Aorta (tissue), 5 donors: ENCODE measurements at regions of chr3 and their contacts with region 1.

Region 1: GRCh38 chr3:160413613-160414248 is 14.3 kb downstream of the SMC4 start:
- DNase-seq: peak in 1 of 2 donors; percentile 72
- ATAC-seq: peak; percentile 76
- H3K4me3 ChIP-seq: no peak overlapping the region
- H3K27ac ChIP-seq: no peak overlapping the region
- H3K4me1 ChIP-seq: no peaks in the 10 kb centered on the region
- H3K27me3 ChIP-seq: no peaks in the 10 kb centered on the region

Region 2: DNA sequence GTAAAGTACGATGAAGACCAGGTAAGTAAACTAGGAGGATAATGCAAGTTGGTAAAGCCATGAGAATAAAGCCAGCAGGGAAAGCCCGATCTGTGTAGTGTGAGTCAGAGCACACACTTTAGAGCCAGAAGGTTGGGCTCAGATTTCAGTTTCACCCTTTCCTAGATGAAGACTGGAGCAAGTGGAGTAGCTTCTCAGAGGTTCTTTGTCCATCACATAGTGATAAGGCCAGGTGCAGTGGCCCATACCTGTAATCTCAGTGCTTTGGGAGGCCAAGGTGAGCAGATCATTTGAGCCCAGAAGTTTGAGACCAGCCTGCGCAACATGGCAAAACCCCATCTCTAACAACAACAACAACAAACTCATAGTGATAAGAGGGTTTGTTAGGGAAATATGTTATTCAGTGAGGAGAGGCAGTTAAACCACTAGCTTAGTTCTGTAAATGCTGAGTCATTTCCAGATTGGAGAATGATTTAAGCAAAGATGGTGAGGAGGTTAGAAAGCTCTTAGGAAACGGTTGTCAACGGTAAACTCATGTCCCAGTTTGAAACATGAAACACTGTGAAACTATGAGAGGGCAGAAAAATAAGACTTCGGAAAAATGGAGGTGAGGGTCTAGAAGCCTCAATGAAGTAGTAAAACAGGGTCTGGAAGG is 386.1 kb before region 1 on chr3:
- intact Hi-C with region 1: loop called (anchors 5 to 10 kb)
- DNase-seq: no peak
- ATAC-seq: no peak
- H3K4me3 ChIP-seq: no peak overlapping the region
- H3K27ac ChIP-seq: no peak overlapping the region
- H3K4me1 ChIP-seq: no peaks in the 10 kb centered on the region
- H3K27me3 ChIP-seq: no peaks in the 10 kb centered on the region

Region 3: DNA sequence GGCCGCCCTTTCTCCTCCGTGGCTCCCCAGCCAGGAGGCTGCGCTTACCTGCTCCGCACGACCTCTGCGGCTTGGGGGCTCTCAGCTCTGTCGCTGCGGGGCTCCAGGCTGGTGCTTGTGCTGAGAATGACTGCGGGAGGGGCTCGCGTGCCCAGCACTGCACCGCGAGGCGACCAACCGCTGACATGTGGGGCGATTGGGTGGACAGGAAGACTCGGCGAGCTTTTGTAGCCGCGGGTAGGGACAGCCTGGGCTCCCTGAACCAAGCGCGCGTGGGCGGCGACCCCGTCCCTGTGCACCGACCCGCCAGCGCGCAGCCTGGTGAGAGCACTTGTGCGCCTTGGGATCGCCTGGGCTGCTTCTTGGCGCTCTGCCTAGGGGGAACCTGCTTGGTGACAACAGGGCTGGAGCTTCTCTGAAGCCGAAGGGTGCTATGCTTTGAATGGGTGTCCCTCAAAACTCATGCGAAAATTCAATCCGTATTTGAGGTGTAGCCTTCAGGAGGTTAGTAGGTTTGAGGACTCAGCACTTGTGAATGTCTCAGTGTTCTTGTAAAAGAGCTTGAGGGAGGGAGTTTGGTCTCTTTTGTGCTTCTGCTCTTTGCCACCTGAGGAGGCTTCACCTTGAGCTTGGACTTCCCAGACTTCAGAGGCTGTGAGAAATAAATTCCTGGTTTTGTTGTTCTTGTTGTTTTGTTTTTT is 374.7 kb before region 1 on chr3:
- intact Hi-C with region 1: loop called (anchors 5 to 10 kb)
- DNase-seq: peak in 1 of 2 donors; percentile 59
- ATAC-seq: peak; percentile 60
- H3K4me3 ChIP-seq: peak overlapping the region in 1 of 2 donors; percentile 2
- H3K27ac ChIP-seq: no peak overlapping the region
- H3K4me1 ChIP-seq: no peaks in the 10 kb centered on the region
- H3K27me3 ChIP-seq: no peaks in the 10 kb centered on the region

Region 4: DNA sequence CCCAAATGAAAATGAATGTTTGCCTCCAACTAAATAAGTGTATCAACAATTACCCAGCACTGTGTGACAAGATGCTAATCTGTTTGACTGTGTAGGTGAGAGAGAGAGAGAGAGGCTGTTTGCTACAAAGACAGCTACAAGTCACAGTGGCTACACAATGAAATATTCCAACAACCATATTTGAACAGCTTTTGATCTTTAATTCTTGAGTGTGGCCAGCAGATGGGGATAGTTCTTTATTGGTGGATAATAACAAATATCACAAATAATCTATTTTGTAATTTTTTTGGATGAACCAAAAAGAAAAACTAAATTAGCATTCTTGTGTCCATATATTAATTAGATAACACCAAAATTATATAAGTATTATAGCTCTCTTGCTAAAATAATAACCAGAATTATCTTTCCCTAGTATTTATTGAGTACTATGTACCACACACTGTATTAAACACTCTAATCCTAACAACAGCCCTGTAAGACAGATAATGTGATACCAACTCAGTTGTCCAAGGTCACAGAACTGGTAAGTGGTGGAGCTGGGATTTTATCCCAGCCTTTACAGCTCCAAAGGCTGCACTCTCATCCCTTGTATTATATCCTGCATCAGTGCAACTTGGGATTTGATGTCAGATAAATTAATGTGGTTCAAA is 250.4 kb before region 1 on chr3:
- intact Hi-C with region 1: loop called (anchors 5 to 10 kb)
- DNase-seq: no peak
- ATAC-seq: peak; percentile 68
- H3K4me3 ChIP-seq: no peak overlapping the region
- H3K27ac ChIP-seq: no peak overlapping the region
- H3K4me1 ChIP-seq: no peaks in the 10 kb centered on the region
- H3K27me3 ChIP-seq: no peaks in the 10 kb centered on the region